ENCODE measurements at regions of chr11 and their contacts with region 1.

Region 1: DNA sequence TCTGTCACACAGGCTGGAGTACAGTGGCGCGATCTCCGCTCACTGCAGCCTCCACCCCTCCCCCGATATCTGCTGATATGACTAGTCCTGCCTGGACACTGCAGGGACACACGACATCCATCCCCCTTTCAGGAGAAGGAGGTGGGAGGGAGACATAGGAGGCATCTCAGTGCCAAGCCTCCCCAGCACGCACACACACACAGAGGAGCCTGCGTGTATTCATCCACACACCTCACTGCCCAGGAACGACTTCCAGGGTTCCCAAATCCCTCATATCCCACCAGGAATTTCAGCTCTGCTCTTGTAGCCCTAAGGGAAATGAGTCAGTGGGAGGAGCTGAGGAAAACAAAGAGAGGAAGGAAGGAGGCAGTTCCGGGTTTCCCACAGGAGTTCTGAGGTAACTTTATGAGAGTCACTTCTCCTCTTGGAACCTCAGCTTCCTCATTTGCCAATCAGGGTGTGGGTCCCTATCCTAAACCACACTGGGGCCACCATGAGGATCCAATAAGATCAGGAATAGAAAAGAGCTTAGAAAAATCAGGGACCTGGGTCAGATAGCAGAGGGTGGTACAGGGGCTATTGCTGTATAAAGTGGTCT is 37.1 kb upstream of the ACER3 start:
- DNase-seq: peak; percentile 97
- H3K4me3 ChIP-seq: peak overlapping the region in 2 of 3 experiments; percentile 25 to 55
- H3K27ac ChIP-seq: peak overlapping the region; percentile 99
- H3K4me1 ChIP-seq: peaks cover 31% of the 10 kb centered on the region
- H3K27me3 ChIP-seq: no peaks in the 10 kb centered on the region
- CTCF ChIP-seq: no peak
- POLR2A ChIP-seq: peak; percentile 68

Region 2: DNA sequence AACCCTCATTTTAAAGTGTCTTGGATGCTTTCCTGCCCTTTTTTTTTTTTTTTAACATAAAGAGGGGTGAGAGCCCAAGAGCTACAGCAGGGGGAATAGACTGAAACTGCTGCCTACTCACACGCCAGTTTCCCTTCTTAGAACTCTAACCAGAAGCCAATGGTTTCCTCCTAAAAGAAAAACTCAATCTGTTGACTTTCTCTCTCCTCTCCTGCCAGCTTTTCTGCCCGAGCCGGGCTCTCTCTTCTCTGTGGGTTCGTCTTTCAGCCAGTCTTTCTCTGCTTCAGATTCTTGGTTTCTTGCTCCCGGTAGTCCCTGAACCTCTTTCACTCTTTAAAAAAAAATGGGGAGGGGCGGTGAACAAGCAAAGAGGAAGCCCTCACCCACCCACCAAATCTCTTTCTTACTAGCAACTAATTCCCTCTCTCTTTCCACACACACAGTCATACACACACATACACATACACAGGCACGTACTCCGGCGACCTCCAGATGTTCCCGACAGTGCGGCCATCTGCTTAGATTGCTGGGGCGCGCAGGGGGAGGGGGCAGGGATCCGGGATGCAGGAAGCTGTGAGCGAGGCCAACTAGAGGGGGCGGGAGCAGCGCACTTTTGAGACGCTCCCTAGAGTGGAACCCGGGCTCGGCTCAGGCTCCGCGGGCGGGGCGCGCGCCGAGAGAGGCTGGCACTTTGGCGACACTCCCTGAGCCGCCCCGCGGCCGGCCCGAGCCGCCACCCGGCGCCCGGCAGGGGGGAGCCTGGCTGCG is 40.9 kb before region 1 on chr11:
- CTCF ChIA-PET with region 1: no interaction called
- POLR2A ChIA-PET with region 1: no interaction called
- dilution Hi-C with region 1: no loop called
- intact Hi-C with region 1: loop called (anchors 1 kb)
- DNase-seq: peak; percentile 86
- H3K4me3 ChIP-seq: peak overlapping the region; percentile 68 to 91 (median 84)
- H3K27ac ChIP-seq: peak overlapping the region; percentile 44
- H3K4me1 ChIP-seq: peaks cover 2% of the 10 kb centered on the region
- H3K27me3 ChIP-seq: peaks cover 0 to 2% of the 10 kb centered on the region in 2 experiments
- CTCF ChIP-seq: no peak
- POLR2A ChIP-seq: peak; percentile 74

Region 3: GRCh38 chr11:76807206-76807875 is 16.2 kb before region 1 on chr11:
- CTCF ChIA-PET with region 1: interaction called, 36 read pairs
- POLR2A ChIA-PET with region 1: no interaction called
- dilution Hi-C with region 1: no loop called
- intact Hi-C with region 1: loop called (anchors 1 kb)
- DNase-seq: peak; percentile 76
- H3K4me3 ChIP-seq: no peak overlapping the region
- H3K27ac ChIP-seq: no peak overlapping the region
- H3K4me1 ChIP-seq: peaks cover 3% of the 10 kb centered on the region
- H3K27me3 ChIP-seq: no peaks in the 10 kb centered on the region
- CTCF ChIP-seq: peak; percentile 80 to 87
- POLR2A ChIP-seq: no peak

Region 4: DNA sequence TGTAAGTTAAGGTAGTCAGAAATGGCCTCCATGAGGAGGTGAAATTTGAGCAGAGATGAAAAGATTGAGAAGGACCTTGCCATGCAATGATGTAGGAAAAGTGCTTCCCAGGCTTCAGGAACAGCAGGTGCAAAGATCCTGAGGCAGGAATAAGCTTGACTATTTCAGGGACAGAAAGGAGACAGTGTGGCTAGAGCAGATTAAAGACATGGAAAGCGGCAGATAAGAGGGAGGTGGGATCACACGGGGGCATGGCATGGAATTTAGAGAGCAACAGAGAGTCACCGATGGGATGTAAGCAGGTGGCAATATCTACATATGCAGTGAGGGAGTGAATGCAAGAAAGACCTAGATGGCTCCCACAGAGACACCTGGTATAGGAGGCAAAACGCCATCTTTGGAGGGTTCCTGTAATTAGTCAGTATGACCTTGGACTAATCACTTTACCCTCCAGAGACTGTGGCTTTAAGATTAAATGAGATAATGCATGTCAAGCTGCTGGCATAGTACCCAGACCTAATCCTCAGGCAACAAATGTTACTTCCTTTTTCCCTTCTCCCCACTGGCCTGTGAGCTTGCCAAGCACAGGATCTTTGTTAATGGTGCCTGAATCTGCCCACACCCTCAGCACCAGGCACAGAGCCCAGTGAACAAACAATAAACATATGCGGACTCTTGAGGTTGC is 12.5 kb after region 1 on chr11:
- CTCF ChIA-PET with region 1: interaction called, 24 read pairs
- POLR2A ChIA-PET with region 1: interaction called, 3 read pairs
- dilution Hi-C with region 1: no loop called
- intact Hi-C with region 1: loop called (anchors 1 kb)
- DNase-seq: peak; percentile 64
- H3K4me3 ChIP-seq: no peak overlapping the region
- H3K27ac ChIP-seq: no peak overlapping the region
- H3K4me1 ChIP-seq: peaks cover 33% of the 10 kb centered on the region
- H3K27me3 ChIP-seq: no peaks in the 10 kb centered on the region
- CTCF ChIP-seq: no peak
- POLR2A ChIP-seq: no peak

Region 5: DNA sequence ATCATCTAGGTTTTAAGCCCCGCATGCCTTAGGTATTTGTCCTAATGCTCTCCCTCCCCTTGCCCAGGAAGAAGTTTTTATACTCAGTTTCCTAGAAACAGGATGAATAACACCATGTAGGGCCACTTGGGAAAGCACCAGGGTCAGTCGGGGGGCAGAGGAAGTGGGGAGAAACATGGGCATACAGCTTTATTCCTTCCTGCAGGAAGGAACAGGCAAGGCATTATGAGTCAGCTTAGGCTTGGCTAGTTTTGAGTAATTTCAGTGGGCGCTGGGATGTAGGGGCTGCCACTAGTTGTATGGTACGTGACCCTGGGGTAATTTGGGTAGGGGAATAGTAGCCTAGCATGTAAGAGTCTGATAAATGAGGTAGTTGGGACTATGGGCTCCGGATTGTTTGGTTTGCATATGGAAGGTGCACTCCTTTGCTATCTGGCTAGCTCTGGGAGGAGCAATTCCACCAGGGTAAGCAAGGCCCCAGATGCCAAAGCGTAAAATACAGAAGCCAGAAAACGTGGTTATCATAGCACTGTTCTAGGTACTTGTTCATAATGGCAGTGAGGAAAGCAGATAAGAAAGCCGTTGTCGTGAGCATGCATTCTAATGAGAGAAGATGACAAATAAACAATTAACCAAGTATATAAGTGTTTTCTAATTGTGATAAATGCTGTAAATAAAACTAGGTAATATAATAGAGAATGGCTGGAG is 62.0 kb after region 1 on chr11:
- CTCF ChIA-PET with region 1: interaction called, 7 read pairs
- POLR2A ChIA-PET with region 1: no interaction called
- dilution Hi-C with region 1: no loop called
- intact Hi-C with region 1: loop called (anchors 1 kb)
- DNase-seq: peak; percentile 96
- H3K4me3 ChIP-seq: no peak overlapping the region
- H3K27ac ChIP-seq: peak overlapping the region; percentile 54
- H3K4me1 ChIP-seq: peaks cover 35% of the 10 kb centered on the region
- H3K27me3 ChIP-seq: no peaks in the 10 kb centered on the region
- CTCF ChIP-seq: no peak
- POLR2A ChIP-seq: no peak

Region 6: DNA sequence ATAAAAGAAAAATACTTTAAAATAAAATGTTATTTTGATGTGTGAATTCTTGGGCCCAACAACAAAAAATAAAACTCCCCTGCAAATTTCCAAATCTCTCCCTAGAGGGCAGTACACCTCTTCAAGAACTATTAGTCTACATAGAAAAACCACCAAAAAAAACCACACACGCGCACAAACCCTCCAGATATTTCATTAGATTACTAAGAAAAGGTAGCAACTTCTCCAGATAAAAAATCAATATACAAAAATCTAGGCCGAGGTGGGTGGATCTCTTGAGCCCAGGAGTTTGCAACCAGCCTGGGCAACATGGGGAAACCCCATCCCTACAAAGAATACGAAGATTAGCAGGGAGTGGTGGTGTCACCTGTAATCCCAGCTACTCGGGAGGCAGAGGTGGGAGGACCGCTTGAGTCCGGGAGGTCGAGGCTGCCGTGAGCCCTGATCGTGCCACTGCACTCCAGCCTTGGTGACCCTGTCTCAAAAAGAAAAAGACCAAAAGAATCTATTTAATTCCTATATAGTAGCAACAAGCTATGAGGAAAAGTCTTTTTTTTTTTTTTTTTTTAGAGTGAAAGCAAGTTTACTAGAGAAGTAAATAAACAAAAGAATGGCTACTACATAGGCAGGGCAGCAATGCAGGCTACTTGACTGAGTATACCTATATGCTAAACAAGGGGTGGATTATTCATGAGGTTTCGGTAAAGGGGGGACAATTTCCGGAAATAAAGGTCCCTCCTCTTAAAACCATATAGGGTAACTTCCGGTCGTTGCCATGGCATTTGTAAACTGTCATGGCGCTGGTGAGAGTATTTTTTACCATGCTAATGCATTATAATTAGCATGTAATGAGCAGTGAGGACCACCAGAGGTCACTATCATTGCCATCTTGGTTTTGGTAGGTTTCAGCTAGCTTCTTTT is 223.7 kb after region 1 on chr11:
- CTCF ChIA-PET with region 1: no interaction called
- POLR2A ChIA-PET with region 1: no interaction called
- dilution Hi-C with region 1: no loop called
- intact Hi-C with region 1: no loop called
- DNase-seq: peak; percentile 97
- H3K4me3 ChIP-seq: peak overlapping the region; percentile 28 to 36 (median 31)
- H3K27ac ChIP-seq: no peak overlapping the region
- H3K4me1 ChIP-seq: peaks cover 5% of the 10 kb centered on the region
- H3K27me3 ChIP-seq: peaks cover 4 to 10% of the 10 kb centered on the region in 2 experiments
- CTCF ChIP-seq: peak; percentile 48 to 59
- POLR2A ChIP-seq: no peak

Measured in endothelial cell of umbilical vein (primary cell).